SK-N-SH (cell line): ENCODE measurements at regions of chr14 and their contacts with region 1.

Region 1: GRCh38 chr14:75487155-75487671 is 35.1 kb upstream of the BATF start:
- DNase-seq: no peak
- H3K4me3 ChIP-seq: no peak overlapping the region
- H3K27ac ChIP-seq: no peak overlapping the region
- H3K4me1 ChIP-seq: no peaks in the 10 kb centered on the region
- H3K27me3 ChIP-seq: no peaks in the 10 kb centered on the region
- CTCF ChIP-seq: no peak
- EP300 ChIP-seq: no peak
- RAD21 ChIP-seq: no peak

Region 2: GRCh38 chr14:75307700-75308379 is 179.4 kb before region 1 on chr14:
- CTCF ChIA-PET with region 1: interaction called, 291 read pairs
- POLR2A ChIA-PET with region 1: interaction called, 3 read pairs
- DNase-seq: peak; percentile 70
- H3K4me3 ChIP-seq: peak overlapping the region in 1 of 2 experiments; percentile 46; a peak in 1 of 4 replicates
- H3K27ac ChIP-seq: no peak overlapping the region
- H3K4me1 ChIP-seq: peaks cover 6 to 14% of the 10 kb centered on the region in 2 experiments; a peak in 2 of 4 replicates
- H3K27me3 ChIP-seq: no peaks in the 10 kb centered on the region
- CTCF ChIP-seq: peak; percentile 95
- EP300 ChIP-seq: no peak
- RAD21 ChIP-seq: peak; percentile 97

Region 3: DNA sequence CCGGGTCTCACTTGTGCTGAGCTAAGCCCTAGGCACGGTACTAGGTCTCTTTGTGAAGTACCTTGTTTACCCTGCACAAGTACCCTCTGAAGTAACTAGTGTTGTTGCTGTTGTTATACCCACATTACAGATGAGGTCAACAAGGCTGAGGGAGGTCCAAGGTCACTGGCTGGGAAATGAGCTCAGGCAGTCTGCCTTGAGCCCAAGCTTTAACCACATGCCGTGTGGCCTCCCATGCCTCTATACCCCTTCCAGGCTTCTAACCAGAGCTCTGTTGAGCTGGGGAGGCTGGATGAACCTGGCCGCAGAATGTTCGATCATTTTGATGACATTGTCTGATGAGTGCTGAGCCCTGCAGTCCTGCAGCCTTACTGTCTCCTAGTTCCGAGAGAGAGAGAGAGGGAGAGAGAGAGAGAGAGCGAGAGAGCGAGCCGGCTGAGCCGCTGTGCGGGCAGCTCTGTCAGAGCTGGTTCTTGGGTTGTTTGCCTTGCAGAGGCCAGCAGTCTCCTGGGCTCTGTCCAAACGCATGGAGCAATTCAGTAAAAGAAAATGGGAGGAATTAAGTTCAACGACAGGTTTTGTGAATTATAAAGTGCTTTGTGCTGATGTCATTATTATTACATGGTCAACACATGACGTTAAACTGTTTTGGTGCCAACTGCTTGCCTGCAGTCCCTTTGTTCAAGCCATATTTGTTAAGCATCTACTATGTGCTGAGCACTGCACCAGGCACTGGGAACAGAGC is 46.3 kb before region 1 on chr14:
- CTCF ChIA-PET with region 1: interaction called, 38 read pairs
- POLR2A ChIA-PET with region 1: no interaction called
- DNase-seq: no peak
- H3K4me3 ChIP-seq: no peak overlapping the region
- H3K27ac ChIP-seq: no peak overlapping the region
- H3K4me1 ChIP-seq: peaks cover 0 to 28% of the 10 kb centered on the region in 2 experiments; a peak in 1 of 4 replicates
- H3K27me3 ChIP-seq: no peaks in the 10 kb centered on the region
- CTCF ChIP-seq: no peak
- EP300 ChIP-seq: no peak
- RAD21 ChIP-seq: no peak

Region 4: DNA sequence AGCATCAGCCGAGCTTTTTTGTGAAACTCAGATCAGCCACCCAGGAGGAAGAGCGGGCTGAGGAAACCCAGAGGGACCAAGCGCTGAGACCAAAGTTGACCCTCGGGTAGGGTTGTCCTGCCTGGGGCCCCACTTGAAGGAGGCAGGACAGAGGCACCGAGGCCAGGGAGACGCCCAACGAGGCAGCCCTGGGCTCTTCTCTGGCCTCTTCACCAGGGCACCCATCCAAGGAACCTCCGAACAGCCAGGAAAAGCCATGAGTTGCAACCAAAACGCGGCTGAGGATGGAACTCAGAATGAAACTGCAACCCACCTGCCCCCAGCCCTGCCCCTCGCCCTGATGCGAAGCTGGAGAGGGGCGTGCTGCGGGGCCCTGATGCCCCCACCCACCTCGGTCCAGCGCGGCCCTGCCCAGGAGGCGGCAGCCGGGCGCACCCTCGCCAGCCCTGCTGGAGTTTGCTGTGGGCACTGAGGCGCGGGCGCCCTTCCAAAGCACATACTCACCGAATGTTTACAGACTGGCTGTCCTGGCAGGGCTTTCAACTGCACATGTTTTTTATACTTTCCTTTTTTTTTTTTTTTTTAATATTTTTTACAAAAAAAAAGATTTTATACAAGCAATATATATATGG is 17.5 kb before region 1 on chr14:
- CTCF ChIA-PET with region 1: interaction called, 29 read pairs
- POLR2A ChIA-PET with region 1: no interaction called
- DNase-seq: no peak
- H3K4me3 ChIP-seq: no peak overlapping the region
- H3K27ac ChIP-seq: no peak overlapping the region
- H3K4me1 ChIP-seq: no peaks in the 10 kb centered on the region
- H3K27me3 ChIP-seq: no peaks in the 10 kb centered on the region
- CTCF ChIP-seq: no peak
- EP300 ChIP-seq: no peak
- RAD21 ChIP-seq: no peak

Region 5: GRCh38 chr14:75554487-75554886 is 67.3 kb after region 1 on chr14:
- CTCF ChIA-PET with region 1: interaction called, 24 read pairs
- POLR2A ChIA-PET with region 1: no interaction called
- DNase-seq: no peak
- H3K4me3 ChIP-seq: no peak overlapping the region
- H3K27ac ChIP-seq: peak overlapping the region in 1 of 2 experiments; percentile 80; a peak in 2 of 4 replicates
- H3K4me1 ChIP-seq: peaks cover 0 to 8% of the 10 kb centered on the region in 2 experiments; a peak in 2 of 4 replicates
- H3K27me3 ChIP-seq: no peaks in the 10 kb centered on the region; the same call in 1 of the 2 replicates
- CTCF ChIP-seq: no peak
- EP300 ChIP-seq: no peak
- RAD21 ChIP-seq: no peak